IMR-90 (cell line): ENCODE measurements at regions of chr18 and their contacts with region 1.

Region 1: GRCh38 chr18:67568166-67568565 is 51.6 kb upstream of the DSEL start:
- DNase-seq: no peak
- ATAC-seq: no peak
- H3K4me3 ChIP-seq: no peak overlapping the region
- H3K27ac ChIP-seq: no peak overlapping the region
- H3K4me1 ChIP-seq: no peaks in the 10 kb centered on the region
- H3K27me3 ChIP-seq: no peaks in the 10 kb centered on the region
- CTCF ChIP-seq: no peak
- POLR2A ChIP-seq: no peak
- RAD21 ChIP-seq: no peak

Region 2: DNA sequence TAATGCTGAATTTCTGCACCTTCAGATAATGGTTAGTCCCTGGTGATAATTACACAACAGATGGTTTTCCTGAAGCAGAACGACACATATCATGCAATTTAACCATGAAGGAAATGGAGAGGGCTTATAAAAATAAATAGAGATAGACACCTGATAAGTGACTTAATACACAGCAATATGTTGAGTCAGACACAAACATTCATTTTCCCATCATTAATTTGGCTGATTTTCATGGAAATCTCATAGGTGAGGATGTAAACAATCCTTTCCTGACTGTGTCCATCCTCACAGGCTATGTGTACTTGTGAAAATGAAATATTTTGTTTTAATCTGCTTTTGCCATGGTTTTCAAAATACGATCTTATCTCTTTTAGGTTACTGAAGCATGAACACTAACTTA is 14.7 kb before region 1 on chr18:
- CTCF ChIA-PET with region 1: no interaction called
- POLR2A ChIA-PET with region 1: no interaction called
- dilution Hi-C with region 1: no loop called
- in situ Hi-C with region 1: no loop called
- intact Hi-C with region 1: no loop called
- DNase-seq: peak; percentile 31
- ATAC-seq: no peak
- H3K4me3 ChIP-seq: no peak overlapping the region
- H3K27ac ChIP-seq: no peak overlapping the region
- H3K4me1 ChIP-seq: no peaks in the 10 kb centered on the region; the same call in 1 of the 2 replicates
- H3K27me3 ChIP-seq: no peaks in the 10 kb centered on the region
- CTCF ChIP-seq: no peak
- POLR2A ChIP-seq: no peak
- RAD21 ChIP-seq: no peak

Region 3: DNA sequence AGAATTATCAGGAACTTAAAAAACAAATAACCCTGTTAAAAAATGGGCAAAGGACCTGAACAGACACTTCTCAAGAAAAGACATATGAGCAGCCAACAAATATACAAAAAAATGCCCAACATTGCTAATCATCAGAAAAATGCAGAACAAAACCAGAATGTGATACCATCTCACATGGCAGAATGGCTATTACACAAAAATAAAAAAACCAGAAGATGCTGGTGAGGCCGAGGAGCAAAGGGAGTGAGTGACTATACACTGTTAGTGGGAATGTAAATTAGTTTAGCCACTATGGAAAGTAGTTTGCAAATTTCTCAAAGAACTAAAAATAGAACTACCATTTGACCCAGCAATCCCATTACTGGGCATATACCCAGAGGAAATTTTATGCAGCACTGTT is 44.1 kb after region 1 on chr18:
- CTCF ChIA-PET with region 1: no interaction called
- POLR2A ChIA-PET with region 1: interaction called, 12 read pairs
- dilution Hi-C with region 1: no loop called
- in situ Hi-C with region 1: no loop called
- intact Hi-C with region 1: no loop called
- DNase-seq: no peak
- ATAC-seq: no peak
- H3K4me3 ChIP-seq: no peak overlapping the region
- H3K27ac ChIP-seq: no peak overlapping the region
- H3K4me1 ChIP-seq: no peaks in the 10 kb centered on the region
- H3K27me3 ChIP-seq: no peaks in the 10 kb centered on the region
- CTCF ChIP-seq: no peak
- POLR2A ChIP-seq: no peak
- RAD21 ChIP-seq: no peak

Region 4: DNA sequence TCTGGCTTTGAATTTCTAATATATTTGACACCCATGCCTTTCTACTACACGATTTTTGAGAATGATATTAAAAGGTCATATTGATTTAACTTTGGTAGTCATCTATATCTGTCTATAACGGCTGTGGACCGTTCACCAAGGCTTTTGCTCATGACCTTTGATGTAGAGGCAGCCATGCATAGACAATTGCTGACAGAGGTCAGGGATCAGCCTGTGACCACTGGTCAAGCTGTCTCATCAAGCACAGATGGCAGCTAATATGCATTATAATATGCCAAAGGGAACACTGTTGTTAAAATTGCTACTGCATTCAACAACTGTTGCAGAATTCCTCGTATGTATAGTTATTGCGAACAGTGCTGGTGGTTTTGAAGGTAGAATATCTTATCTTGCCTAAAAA is 272.2 kb after region 1 on chr18:
- CTCF ChIA-PET with region 1: no interaction called
- POLR2A ChIA-PET with region 1: no interaction called
- dilution Hi-C with region 1: no loop called
- in situ Hi-C with region 1: no loop called
- intact Hi-C with region 1: no loop called
- DNase-seq: no peak
- ATAC-seq: no peak
- H3K4me3 ChIP-seq: no peak overlapping the region
- H3K27ac ChIP-seq: no peak overlapping the region
- H3K4me1 ChIP-seq: no peaks in the 10 kb centered on the region
- H3K27me3 ChIP-seq: no peaks in the 10 kb centered on the region
- CTCF ChIP-seq: no peak
- POLR2A ChIP-seq: no peak
- RAD21 ChIP-seq: no peak